ENCODE measurements at regions of chr19 and their contacts with region 1.

Region 1: DNA sequence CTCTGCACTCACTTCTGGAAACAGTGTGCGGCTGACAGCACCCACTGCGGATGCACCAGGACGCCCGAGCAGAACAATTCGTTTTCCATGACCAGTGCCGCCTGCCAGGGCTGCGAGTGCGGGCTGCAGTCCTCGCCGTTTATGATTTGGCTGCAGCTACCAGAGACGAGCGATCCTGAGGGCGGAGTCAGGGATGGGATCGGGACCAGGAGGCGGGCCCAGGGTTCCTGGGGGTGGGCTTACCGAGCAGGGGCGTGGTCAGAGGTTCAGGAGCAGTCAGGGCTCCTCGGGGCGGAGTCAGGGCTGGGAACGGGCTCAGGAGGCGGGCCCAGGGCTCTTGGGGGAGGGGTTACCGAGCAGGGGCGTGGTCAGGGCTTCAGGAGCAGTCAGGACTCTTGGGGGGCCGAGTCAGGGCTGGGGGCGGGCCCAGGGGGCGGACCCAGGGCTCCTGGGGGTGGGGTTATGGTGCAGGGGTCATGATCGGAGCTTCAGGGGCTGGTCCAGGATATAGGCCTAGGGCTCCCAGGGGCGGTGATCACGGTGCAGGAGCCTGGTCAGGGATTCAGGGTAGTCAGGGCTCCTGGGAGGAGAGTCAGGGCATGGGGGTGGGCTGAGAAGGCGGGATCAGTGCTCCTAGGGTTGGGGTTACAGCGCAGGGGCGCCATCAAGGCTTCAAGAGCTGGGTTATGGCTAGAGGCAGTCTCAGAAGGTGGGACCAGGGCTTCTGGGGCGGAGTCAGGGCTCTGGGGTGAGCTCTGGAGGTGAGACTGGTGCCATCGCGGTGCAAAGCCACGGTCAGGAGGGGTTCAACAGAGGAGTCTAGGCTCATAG is 1.7 kb downstream of the KLK4 start:
- DNase-seq: peak in 1 of 2 donors; percentile 36
- H3K4me3 ChIP-seq: no peak overlapping the region
- CTCF ChIP-seq: no peak
- POLR2A ChIP-seq: no peak

Region 2: DNA sequence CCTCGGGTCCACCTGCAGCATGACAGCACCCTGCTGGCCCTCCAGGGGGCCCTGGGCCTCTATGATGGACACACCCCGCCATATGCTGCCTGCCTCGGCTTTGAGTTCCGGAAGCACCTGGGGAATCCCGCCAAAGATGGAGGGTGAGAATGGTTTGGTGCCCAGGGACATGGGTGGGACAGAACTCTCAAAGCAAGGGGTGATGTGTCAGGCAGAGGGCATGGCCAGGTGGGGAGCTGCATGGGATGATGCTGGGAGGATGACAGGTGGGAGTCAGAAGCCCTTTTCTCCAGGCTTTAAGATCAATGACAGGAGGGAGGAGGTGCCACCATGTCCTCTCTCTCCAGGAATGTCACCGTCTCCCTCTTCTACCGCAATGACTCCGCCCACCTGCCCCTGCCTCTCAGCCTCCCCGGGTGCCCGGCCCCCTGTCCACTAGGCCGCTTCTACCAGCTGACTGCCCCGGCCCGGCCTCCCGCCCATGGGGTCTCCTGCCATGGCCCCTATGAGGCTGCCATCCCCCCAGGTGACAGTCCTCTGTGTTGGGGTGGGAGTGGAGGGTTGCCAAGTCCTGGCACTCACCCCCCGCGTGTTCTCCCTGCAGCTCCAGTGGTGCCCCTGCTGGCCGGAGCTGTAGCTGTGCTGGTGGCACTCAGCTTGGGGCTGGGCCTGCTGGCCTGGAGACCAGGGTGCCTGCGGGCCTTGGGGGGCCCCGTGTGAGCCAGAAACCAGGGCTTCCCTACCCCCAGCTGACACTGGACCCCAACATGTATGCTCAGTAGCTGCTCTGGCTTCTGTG is 114.8 kb before region 1 on chr19:
- intact Hi-C with region 1: loop called (anchors 10 kb)
- DNase-seq: no peak
- H3K4me3 ChIP-seq: no peak overlapping the region
- CTCF ChIP-seq: no peak
- POLR2A ChIP-seq: no peak

Region 3: DNA sequence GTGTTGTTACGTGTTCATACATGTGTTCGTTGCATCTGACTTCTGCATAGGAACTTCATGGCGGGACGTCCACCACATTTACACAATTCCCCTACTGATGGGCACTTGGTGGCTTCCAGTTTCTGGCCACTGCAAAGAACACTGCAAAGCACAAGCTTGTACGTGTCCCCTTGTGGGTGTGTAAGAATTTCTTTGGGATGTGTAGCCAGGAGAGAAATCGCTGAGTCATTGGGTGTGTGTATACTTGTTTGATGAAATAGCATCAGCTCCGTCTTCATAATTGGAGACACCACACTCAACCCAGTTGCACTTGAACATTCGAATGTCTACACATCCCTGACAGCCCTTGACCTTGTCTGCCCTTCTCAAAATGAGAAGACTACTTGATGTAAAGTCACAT is 24.2 kb after region 1 on chr19:
- intact Hi-C with region 1: no loop called
- DNase-seq: peak in 1 of 2 donors; percentile 35
- H3K4me3 ChIP-seq: no peak overlapping the region
- CTCF ChIP-seq: no peak
- POLR2A ChIP-seq: no peak

Region 4: GRCh38 chr19:51020988-51021651 is 111.7 kb after region 1 on chr19:
- intact Hi-C with region 1: no loop called
- DNase-seq: no peak
- H3K4me3 ChIP-seq: no peak overlapping the region
- CTCF ChIP-seq: no peak
- POLR2A ChIP-seq: no peak